Calu3 (cell line): ENCODE measurements at regions of chr7 and their contacts with region 1.

Region 1: DNA sequence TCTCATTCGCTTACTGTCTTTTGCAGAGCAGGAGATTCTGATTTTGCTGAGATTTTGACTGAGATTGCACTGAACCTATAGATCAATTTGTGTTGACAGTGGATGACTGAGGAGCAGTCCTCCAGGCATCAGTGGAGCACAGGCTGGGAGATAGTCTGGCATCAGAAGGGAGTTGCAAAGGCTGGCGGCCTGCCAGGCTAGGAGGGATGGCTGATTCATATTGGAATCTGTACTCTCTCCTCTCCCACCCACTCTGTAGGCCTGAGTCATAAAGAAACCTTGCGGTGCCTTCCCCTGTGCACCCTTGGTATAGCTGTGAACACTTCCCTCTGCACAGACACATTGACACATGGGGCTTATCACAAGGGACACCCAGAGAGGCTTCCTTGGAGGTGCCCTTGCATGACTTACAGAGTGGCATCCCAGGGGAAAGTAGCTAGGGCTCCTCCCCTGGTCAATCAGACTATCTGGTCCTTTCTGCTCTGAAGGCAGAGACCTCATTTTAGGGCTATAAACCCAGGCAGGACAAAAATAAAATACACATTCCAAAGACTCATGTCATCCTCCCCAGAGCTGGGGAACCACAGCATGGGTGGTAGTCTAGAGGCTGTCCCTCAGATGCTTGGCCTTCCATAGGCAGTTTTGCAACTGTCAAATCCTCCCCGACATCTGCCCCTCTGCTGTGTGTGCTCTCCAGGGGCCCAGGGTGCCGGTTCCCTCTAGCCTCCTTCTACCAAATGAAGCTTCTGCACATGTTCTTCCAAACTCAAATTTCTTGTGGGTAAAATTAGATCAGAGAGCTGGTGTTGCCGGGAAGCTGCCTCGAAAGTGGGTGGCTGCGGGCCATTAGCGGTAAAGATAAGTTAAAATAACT is 37.4 kb upstream of the EEPD1 start:
- DNase-seq: peak; percentile 94
- H3K4me3 Mint-ChIP-seq: peak overlapping the region; percentile 57
- H3K27ac Mint-ChIP-seq: peak overlapping the region; percentile 93
- H3K4me1 Mint-ChIP-seq: peaks cover 60% of the 10 kb centered on the region
- H3K27me3 Mint-ChIP-seq: no peaks in the 10 kb centered on the region
- CTCF ChIP-seq: no peak

Region 2: GRCh38 chr7:36037121-36037662 is 78.5 kb before region 1 on chr7:
- CTCF ChIA-PET with region 1: interaction called, 7 read pairs
- intact Hi-C with region 1: loop called (anchors 1 kb)
- DNase-seq: peak; percentile 86
- H3K4me3 Mint-ChIP-seq: no peak overlapping the region
- H3K27ac Mint-ChIP-seq: peak overlapping the region; percentile 16
- H3K4me1 Mint-ChIP-seq: peaks cover 54% of the 10 kb centered on the region
- H3K27me3 Mint-ChIP-seq: no peaks in the 10 kb centered on the region
- CTCF ChIP-seq: no peak

Region 3: DNA sequence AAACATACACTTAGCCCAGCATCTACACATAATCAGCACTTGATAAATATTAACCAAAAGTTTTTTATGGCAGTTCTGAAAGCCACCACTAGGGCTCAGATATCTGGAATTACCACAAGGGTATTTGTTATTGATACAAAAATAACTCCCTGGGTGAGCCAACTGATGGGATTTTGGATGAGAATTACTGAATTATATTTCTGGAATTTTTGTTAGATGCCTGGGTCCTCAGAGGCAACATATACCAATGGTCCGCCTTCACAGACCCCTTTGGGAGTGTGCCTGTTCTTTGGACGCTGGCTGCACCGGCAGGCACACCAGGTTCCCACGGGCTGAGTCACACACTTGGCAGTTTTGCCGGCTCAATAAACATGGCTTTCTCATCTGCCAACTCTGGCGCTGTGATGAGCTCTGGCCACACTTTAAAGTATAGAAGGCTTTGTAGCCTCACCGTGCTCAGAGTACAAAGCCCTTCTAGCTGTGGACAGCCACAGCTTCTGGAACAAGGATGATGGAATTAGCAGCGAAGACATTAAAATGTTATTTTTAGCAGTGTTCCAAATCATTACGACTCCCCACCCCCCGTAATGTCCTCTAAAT is 12.9 kb after region 1 on chr7:
- CTCF ChIA-PET with region 1: interaction called, 17 read pairs
- intact Hi-C with region 1: no loop called
- DNase-seq: peak; percentile 91
- H3K4me3 Mint-ChIP-seq: peak overlapping the region; percentile 52
- H3K27ac Mint-ChIP-seq: peak overlapping the region; percentile 76
- H3K4me1 Mint-ChIP-seq: peaks cover 38% of the 10 kb centered on the region
- H3K27me3 Mint-ChIP-seq: no peaks in the 10 kb centered on the region
- CTCF ChIP-seq: peak; percentile 91

Region 4: GRCh38 chr7:36152756-36153570 is 37.3 kb after region 1 on chr7 and contains the start of gene EEPD1:
- CTCF ChIA-PET with region 1: interaction called, 3 read pairs
- intact Hi-C with region 1: loop called (anchors 5 kb)
- DNase-seq: peak; percentile 100
- H3K4me3 Mint-ChIP-seq: peak within 1 kb of the TSS; percentile 93
- H3K27ac Mint-ChIP-seq: peak within 1 kb of the TSS; percentile 74
- H3K4me1 Mint-ChIP-seq: peaks cover 57% of the 10 kb centered on the region
- H3K27me3 Mint-ChIP-seq: no peaks in the 10 kb centered on the region
- CTCF ChIP-seq: peak; percentile 11
- total RNA-seq, gene EEPD1: 48.8 and 55.5 TPM in 2 replicates

Region 5: DNA sequence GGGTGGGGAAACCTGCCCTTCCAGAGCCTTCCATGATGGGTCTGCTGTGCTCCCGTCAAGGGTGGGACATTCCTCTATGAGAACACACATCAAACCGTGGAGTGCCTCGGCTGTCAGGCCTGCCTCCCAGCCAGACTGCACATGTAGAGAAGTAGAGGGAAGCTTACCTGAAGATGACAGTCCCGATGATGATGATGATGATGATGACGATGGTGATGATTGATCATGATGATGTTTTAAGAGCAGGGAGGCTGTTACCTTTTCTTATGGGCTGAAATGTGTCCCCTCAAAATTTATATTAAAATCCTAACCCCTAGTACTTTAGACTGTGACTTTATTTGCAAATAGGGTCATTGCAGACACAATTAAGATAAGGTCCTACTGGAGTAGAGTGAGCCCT is 197.9 kb after region 1 on chr7:
- CTCF ChIA-PET with region 1: no interaction called
- intact Hi-C with region 1: no loop called
- DNase-seq: no peak
- H3K4me3 Mint-ChIP-seq: no peak overlapping the region
- H3K27ac Mint-ChIP-seq: no peak overlapping the region
- H3K4me1 Mint-ChIP-seq: peaks cover 20% of the 10 kb centered on the region
- H3K27me3 Mint-ChIP-seq: no peaks in the 10 kb centered on the region
- CTCF ChIP-seq: no peak

Region 6: DNA sequence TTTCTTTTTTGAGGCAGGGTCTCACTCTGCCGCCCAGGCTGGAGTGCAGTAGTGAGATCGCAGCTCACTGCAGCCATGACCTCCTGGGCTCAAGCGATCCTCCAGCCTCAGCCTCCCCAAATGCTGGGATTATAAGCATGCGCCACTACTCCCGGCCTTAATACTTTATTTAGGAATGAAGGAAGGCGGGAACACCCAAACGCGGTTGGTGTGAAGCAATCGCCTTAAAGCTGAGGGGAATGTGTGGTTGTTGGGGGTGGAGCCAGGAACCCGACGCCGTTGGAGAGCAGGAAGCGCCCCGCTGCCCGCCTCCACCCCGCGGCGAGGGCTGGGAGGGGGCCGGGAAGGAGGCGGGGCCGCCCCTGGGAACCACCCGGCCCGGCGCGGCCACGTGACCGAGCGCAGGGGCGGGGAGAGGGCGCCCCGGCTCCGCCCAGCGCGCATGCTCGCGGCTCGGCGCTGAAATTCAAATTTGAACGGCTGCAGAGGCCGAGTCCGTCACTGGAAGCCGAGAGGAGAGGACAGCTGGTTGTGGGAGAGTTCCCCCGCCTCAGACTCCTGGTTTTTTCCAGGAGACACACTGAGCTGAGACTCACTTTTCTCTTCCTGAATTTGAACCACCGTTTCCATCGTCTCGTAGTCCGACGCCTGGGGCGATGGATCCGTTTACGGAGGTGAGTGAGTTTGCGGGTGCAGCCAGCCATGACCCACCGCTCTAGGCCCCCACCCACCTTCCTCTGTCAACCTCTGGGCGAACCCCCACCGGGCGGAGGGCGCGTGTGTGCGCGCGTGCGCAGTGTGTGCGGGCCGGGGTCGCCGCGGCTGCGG is 273.9 kb after region 1 on chr7 and contains the start of gene ANLN:
- CTCF ChIA-PET with region 1: no interaction called
- intact Hi-C with region 1: loop called (anchors 10 kb)
- DNase-seq: peak; percentile 100
- H3K4me3 Mint-ChIP-seq: peak within 1 kb of the TSS; percentile 82
- H3K27ac Mint-ChIP-seq: peak within 1 kb of the TSS; percentile 92
- H3K4me1 Mint-ChIP-seq: peaks cover 54% of the 10 kb centered on the region
- H3K27me3 Mint-ChIP-seq: no peaks in the 10 kb centered on the region
- CTCF ChIP-seq: no peak
- total RNA-seq, gene ANLN: 207 and 274 TPM in 2 replicates